Posterior vena cava (tissue), 2 donors: ENCODE measurements at regions of chr16 and their contacts with region 1.

Region 1: GRCh38 chr16:70589998-70590471 is 56.3 kb upstream of the IL34 start:
- DNase-seq: no peak

Region 2: GRCh38 chr16:70634861-70635260 is 44.8 kb after region 1 on chr16:
- intact Hi-C with region 1: loop called in 1 of 2 experiments (anchors 5 kb)
- DNase-seq: no peak